A673 (cell line): ENCODE measurements at regions of chr11 and their contacts with region 1.

Region 1: DNA sequence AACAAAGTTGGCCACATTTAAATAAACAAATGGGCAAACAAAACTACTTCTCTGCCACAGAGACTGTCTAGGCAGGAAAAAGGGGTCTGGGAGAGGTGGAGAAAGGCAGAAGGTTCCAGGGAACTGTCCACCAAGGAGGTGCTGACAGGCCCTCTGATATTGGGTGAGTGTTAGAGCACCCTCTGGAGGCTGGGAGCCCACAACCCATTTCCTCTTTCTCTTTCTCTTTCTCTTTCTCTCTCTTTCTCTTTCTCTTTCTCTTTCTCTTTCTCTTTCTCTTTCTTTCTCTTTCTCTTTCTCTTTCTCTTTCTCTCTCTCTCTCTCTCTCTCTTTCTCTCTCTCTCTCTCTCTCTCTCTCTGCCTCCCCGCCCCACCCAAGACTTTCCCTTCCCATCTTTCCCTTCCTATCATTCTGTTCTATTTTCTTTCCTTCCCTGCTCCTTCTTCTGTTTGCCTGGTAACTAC is 912.8 kb downstream of the DLG2 start:
- DNase-seq: peak; percentile 80
- H3K4me3 ChIP-seq: no peak overlapping the region
- H3K27ac ChIP-seq: no peak overlapping the region
- H3K4me1 ChIP-seq: no peaks in the 10 kb centered on the region
- H3K27me3 ChIP-seq: peaks cover 13% of the 10 kb centered on the region
- CTCF ChIP-seq: peak; percentile 77

Region 2: GRCh38 chr11:84390441-84391078 is 323.8 kb before region 1 on chr11:
- CTCF ChIA-PET with region 1: no interaction called
- POLR2A ChIA-PET with region 1: no interaction called
- intact Hi-C with region 1: loop called (anchors 5 kb)
- DNase-seq: peak; percentile 15
- H3K4me3 ChIP-seq: no peak overlapping the region
- H3K27ac ChIP-seq: no peak overlapping the region
- H3K4me1 ChIP-seq: no peaks in the 10 kb centered on the region
- H3K27me3 ChIP-seq: no peaks in the 10 kb centered on the region
- CTCF ChIP-seq: 0 out of 2 replicates have a peak, but pooled peaks have one; percentile 26

Region 3: DNA sequence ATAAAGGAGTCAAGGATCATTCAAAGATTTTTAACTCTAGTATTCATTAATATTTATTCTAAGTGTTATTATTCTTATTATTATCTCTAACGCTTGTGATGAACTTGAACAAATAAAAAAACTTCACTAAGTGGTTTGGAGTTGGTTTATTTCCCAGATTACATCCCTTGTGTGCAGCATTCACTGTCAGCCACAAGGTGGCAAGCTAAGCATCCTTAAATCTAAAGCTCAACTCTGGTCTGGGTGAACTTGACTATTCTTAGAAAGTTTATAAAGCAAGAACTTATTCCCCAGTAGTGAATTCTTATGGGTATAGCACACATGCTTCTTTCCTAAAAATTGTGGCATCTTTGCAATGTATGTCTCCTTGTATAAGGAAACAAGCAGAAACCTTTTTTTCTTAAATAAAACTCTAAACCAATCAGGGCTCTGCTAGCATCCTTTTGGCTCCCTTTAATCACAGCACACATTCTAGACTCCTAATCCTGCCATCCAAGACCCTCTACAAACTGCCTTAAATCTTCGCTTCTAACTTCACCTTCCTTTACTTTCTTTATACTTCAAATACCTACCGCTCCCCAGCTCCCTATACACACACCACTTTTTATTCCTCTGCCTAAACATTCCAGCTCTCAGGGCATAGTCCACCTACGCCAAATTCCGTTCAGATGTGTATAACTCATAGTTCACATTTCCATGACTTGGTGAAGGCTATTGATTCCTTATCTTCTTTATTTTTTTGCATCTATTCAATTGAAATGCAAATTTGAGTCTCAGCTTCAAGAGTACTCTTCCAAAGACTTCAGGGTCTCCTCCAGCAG is 156.1 kb before region 1 on chr11:
- CTCF ChIA-PET with region 1: interaction called, 8 read pairs
- POLR2A ChIA-PET with region 1: no interaction called
- intact Hi-C with region 1: loop called (anchors 2 kb)
- DNase-seq: peak; percentile 68
- H3K4me3 ChIP-seq: no peak overlapping the region
- H3K27ac ChIP-seq: no peak overlapping the region
- H3K4me1 ChIP-seq: no peaks in the 10 kb centered on the region
- H3K27me3 ChIP-seq: no peaks in the 10 kb centered on the region
- CTCF ChIP-seq: peak; percentile 93